AG04450 (cell line): ENCODE measurements at regions of chr4 and their contacts with region 1.

Region 1: DNA sequence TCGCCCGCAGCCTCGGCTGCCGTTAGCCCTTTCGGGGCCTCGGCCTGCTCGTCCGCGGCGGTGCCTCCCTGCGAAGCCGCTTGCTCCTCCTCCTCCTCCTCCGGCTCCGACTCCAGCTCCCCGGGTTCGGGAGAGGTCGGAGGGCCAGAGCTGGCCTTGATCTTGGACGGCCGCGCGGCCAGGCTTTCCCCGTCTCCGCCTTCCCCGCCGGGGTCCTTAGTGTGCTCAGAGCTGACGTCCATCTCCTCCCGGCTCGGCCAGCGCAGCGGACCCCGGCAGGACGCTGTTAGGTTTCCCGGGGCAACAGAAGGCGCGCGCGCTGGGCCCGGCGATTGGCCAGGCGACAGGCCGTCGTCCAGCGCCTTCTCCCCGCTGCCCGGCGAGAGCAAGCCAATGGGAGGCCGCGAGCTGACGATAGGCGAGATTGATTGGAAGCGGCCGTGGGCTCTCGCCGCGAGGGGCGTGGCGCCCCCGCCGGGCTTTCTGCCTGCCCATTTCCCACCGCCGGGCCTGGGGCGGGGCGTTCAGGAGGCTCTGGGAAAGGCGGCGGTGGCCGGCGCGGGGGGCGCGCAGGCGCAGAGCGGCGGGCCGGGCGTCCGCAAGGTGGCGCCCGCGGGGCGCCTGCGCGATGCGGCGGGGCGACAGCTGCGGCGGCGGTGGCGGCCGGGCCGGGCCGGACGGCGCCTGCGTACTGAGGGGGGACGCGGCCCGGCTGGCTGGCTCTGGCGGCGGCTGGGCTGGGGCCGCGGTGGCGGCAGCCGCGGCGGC is at the start of gene TADA2B:
- DNase-seq: peak; percentile 92
- H3K4me3 ChIP-seq: peak within 1 kb of the TSS; percentile 92
- H3K27ac ChIP-seq: peak within 1 kb of the TSS; percentile 70
- H3K27me3 ChIP-seq: no peaks in the 10 kb centered on the region
- CTCF ChIP-seq: no peak
- polyA plus RNA-seq, gene TADA2B: 6.4 and 6.5 TPM in 2 replicates

Region 2: DNA sequence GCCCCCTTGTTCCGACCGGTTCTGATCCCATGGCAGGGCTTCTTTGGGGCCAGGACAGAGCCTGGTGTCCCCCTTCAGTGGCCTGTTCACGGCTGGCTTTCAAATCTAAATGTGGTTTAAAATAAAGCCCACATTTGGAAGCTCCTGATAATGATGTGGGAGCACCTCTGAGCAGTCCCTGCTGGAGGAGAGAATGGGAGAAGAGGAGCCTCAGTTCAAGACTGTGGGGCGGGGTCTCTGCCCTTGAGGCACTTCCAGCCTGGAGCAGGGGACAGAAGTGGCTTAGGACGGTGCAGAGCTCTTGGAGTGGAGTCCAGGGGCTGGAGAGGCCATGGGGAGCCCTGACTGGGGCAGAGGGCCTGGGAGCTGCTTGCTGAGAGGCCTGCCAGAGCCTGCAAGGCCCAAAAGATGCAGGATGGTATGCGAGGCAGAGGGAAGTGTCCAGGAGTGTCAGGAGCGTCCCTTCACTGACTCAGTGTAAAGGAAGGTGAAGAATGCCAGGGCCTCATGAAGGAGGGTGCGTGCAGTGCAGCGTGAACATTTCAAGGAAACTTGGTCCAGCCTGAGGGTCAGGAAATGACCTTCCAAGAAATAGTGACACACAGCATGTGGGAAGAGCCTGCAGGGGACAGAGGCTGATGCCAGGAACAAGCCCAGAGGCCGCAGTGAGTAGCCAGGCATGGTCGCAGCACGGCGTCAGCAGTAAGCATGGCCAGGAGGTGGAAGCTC is 20.8 kb before region 1 on chr4:
- CTCF ChIA-PET with region 1: interaction called, 13 read pairs
- POLR2A ChIA-PET with region 1: interaction called, 4 read pairs
- DNase-seq: peak; percentile 46
- H3K4me3 ChIP-seq: no peak overlapping the region
- H3K27ac ChIP-seq: peak overlapping the region; percentile 87
- H3K27me3 ChIP-seq: no peaks in the 10 kb centered on the region
- CTCF ChIP-seq: no peak

Region 3: DNA sequence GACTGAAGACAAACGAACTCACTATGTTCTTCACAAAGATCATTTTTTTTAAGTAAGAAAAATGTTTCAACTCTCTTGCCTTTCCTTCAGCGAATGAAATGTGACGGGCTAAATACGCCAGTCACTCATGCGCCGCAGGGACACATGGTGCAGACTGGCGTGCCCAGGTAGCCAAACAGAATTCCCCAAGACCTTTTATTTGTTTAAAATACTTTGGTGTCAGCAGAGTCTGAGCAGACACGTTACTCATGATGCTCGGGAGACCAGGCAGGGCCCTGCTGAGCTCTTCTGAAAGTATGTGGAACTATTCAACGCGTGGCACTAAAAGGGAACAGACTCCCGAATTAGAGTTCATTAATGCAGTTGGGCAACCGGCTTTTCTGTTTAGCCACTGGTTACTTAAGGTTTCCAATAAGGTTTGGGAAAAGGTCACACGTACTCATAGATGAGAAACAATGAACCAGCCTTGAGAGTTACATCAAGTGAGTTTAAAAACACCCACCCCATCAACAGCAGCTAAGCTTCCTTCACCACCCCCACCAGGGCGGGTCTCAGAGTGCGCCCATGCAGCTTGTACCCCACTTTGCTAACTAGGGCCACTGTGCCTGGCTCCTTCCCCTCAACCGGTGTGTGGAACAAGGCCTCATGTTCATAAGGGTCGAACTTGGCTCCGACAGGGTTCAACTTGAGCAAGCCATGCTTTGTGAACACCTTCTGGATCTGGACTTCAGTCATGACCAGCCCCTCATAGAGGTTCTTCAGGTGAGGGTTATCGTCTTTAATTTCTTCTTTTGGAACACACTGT is 17.7 kb after region 1 on chr4:
- CTCF ChIA-PET with region 1: interaction called, 38 read pairs
- POLR2A ChIA-PET with region 1: interaction called, 6 read pairs
- DNase-seq: no peak
- H3K4me3 ChIP-seq: no peak overlapping the region
- H3K27ac ChIP-seq: no peak overlapping the region
- H3K27me3 ChIP-seq: no peaks in the 10 kb centered on the region
- CTCF ChIP-seq: no peak

Region 4: GRCh38 chr4:7238300-7238960 is 195.5 kb after region 1 on chr4:
- CTCF ChIA-PET with region 1: no interaction called
- POLR2A ChIA-PET with region 1: no interaction called
- DNase-seq: no peak
- H3K4me3 ChIP-seq: no peak overlapping the region
- H3K27ac ChIP-seq: no peak overlapping the region
- H3K27me3 ChIP-seq: peaks cover 24% of the 10 kb centered on the region
- CTCF ChIP-seq: 0 out of 2 replicates have a peak, but pooled peaks have one; percentile 31

Region 5: DNA sequence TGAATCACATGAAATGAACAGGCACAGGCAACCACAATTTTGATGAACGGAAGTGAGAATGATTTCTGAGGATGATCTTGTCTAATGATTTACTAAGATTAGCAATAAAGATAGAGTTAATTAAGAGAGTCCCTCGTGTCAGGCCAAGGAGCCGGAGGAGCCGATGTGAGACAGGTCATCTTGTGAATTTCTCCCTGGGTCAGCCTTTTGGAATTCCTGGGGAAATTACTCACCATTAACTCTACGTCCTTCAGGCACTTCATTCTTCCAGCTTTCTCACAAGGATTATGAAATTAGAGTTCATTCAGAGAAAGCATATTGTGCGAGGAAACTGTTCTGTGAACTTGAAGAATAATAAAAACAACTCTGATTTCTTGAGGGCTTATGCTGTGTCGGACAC is 305.1 kb after region 1 on chr4:
- CTCF ChIA-PET with region 1: no interaction called
- POLR2A ChIA-PET with region 1: no interaction called
- DNase-seq: no peak
- H3K4me3 ChIP-seq: no peak overlapping the region
- H3K27ac ChIP-seq: no peak overlapping the region
- H3K27me3 ChIP-seq: peaks cover 23% of the 10 kb centered on the region
- CTCF ChIP-seq: no peak